ENCODE measurements at regions of chr17 and their contacts with region 1.

Region 1: DNA sequence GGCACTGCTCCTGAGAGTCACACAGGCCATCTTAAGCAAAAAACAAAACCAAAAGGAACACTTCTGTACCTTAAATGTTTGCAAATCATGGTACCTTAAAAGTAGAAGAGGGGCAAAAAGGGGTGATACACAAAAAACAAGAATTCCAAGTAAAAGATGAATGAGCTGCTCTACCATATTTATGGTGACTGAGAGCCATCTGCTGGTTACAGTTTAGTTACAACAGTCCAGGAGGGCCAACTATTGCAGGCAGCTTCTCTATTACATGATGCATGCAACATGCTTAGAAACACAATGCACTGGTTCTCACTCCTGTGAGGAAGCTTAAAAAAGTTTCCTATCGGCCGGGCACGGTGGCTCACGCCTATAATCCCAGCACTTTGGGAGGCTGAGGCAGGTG is 53.5 kb downstream of the STX8 start:
- DNase-seq: no peak
- ATAC-seq: peak; percentile 70 to 75

Region 2: GRCh38 chr17:9200699-9201359 is 321.2 kb before region 1 on chr17:
- intact Hi-C with region 1: loop called in 1 of 2 experiments (anchors 10 kb)
- DNase-seq: no peak
- ATAC-seq: no peak

Region 3: GRCh38 chr17:9350080-9350479 is 172.0 kb before region 1 on chr17:
- intact Hi-C with region 1: no loop called
- DNase-seq: no peak
- ATAC-seq: no peak

Measured in left cardiac atrium (tissue), 4 donors.